Activated CD4-positive, alpha-beta T cell treated with anti-CD3 and anti-CD28 coated beads for 36 hours (primary cell): ENCODE measurements at regions of chr1 and their contacts with region 1.

Region 1: GRCh38 chr1:35451125-35451528 is 106.1 kb downstream of the KIAA0319L start:
- DNase-seq: peak; percentile 89
- ATAC-seq: peak; percentile 68
- H3K4me3 Mint-ChIP-seq: no peak overlapping the region
- H3K27ac Mint-ChIP-seq: peak overlapping the region; percentile 74
- H3K4me1 Mint-ChIP-seq: peaks cover 41% of the 10 kb centered on the region
- H3K27me3 Mint-ChIP-seq: no peaks in the 10 kb centered on the region

Region 2: DNA sequence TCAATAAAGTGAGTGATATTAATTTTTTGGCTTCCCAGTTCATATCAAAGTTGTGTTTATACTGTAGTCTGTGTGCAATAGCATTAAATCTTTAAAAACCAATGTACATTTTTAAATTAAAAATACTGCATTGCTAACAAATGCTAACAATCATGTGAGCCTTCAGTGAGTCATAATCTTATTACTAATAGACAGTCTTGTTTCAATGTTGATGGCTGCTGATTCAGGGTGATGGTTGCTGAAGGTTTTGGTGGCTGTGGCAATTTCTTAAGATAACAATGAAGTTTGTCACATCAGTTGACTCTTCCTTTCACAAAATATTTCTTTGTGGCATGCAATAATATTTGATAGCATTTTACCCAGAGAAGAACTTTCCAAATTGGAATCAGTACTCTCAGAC is 73.6 kb before region 1 on chr1:
- CTCF ChIA-PET with region 1: no interaction called
- POLR2A ChIA-PET with region 1: no interaction called
- intact Hi-C with region 1: no loop called
- DNase-seq: no peak
- ATAC-seq: no peak
- H3K4me3 Mint-ChIP-seq: no peak overlapping the region
- H3K27ac Mint-ChIP-seq: no peak overlapping the region
- H3K4me1 Mint-ChIP-seq: no peaks in the 10 kb centered on the region
- H3K27me3 Mint-ChIP-seq: no peaks in the 10 kb centered on the region

Region 3: GRCh38 chr1:35408925-35409324 is 42.2 kb before region 1 on chr1:
- CTCF ChIA-PET with region 1: interaction called, 10 read pairs
- POLR2A ChIA-PET with region 1: no interaction called
- intact Hi-C with region 1: no loop called
- DNase-seq: no peak
- ATAC-seq: no peak
- H3K4me3 Mint-ChIP-seq: no peak overlapping the region
- H3K27ac Mint-ChIP-seq: no peak overlapping the region
- H3K4me1 Mint-ChIP-seq: no peaks in the 10 kb centered on the region
- H3K27me3 Mint-ChIP-seq: no peaks in the 10 kb centered on the region

Region 4: DNA sequence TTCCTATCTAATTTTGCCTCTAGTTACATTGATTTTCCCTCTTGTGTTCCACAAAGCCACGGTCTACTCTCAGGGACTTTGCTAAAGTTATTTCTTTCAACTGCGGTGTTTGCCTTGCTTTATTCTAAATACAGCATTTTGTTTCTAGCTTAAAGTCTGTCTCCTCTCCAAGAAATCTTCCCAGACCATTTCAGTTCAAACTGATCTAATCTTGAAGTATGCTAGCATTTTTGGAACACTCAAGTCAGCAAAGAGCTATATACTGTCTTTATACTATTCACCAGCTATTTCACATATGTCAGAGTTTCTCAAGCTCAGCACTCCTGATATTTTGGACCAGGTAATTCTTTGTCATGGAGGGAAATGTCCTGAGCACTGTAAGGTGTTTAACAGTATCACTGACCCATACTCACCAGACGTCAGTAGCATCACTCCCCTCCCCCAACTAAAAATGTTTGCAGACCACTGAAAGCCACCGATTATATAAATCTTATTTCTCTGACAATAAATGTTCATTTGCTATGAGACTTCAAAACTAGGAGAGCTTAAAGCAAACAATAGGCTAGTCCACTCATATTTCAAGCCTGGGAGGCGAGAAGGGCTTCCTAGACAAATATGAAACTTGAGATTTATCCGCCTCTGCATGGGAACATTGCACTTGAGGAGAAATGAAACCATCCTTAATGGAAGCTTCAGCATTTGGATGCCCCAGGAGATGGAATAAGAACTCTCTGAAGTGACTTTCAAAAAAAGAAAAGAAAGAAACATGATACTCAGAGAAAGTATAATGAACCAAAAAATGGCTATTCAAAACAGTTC is 24.9 kb after region 1 on chr1:
- CTCF ChIA-PET with region 1: interaction called, 25 read pairs
- POLR2A ChIA-PET with region 1: no interaction called
- intact Hi-C with region 1: no loop called
- DNase-seq: no peak
- ATAC-seq: no peak
- H3K4me3 Mint-ChIP-seq: no peak overlapping the region
- H3K27ac Mint-ChIP-seq: no peak overlapping the region
- H3K4me1 Mint-ChIP-seq: no peaks in the 10 kb centered on the region
- H3K27me3 Mint-ChIP-seq: no peaks in the 10 kb centered on the region

Region 5: DNA sequence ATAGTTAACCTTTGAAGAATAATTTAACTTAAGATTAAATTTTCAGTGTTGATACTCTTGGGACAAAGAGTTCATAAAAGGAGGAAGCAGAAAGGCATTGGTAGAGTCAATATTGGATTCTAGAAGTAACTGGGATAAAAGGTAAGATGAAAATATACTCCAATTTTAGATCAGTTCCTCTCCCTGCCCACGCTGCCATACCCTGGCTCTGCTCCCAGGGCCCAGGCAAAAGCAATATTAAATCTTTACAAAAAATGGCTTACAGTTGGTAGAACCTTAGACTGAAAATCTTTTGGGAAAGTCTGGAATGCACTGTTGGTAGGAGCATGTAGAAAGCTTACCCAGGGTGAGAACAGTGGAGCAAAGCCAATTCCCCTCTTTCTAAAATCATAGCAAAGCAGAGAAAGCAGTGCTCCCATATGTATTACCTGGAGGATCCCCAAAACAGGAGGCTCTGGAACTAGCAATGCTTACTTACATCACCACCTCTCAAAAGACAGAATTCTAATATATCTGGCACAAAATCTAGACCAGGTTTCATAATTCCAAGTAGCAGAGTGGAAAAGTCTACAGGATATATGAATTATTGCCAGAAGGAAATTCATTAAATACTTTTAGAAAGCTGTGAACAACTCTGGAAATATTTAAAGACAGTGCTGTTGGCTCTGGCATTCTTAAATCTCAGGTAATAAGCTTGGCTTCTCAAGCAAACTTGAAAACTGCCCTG is 81.5 kb after region 1 on chr1:
- CTCF ChIA-PET with region 1: interaction called, 54 read pairs
- POLR2A ChIA-PET with region 1: no interaction called
- intact Hi-C with region 1: no loop called
- DNase-seq: no peak
- ATAC-seq: no peak
- H3K4me3 Mint-ChIP-seq: no peak overlapping the region
- H3K27ac Mint-ChIP-seq: no peak overlapping the region
- H3K4me1 Mint-ChIP-seq: peaks cover 34% of the 10 kb centered on the region
- H3K27me3 Mint-ChIP-seq: no peaks in the 10 kb centered on the region

Region 6: DNA sequence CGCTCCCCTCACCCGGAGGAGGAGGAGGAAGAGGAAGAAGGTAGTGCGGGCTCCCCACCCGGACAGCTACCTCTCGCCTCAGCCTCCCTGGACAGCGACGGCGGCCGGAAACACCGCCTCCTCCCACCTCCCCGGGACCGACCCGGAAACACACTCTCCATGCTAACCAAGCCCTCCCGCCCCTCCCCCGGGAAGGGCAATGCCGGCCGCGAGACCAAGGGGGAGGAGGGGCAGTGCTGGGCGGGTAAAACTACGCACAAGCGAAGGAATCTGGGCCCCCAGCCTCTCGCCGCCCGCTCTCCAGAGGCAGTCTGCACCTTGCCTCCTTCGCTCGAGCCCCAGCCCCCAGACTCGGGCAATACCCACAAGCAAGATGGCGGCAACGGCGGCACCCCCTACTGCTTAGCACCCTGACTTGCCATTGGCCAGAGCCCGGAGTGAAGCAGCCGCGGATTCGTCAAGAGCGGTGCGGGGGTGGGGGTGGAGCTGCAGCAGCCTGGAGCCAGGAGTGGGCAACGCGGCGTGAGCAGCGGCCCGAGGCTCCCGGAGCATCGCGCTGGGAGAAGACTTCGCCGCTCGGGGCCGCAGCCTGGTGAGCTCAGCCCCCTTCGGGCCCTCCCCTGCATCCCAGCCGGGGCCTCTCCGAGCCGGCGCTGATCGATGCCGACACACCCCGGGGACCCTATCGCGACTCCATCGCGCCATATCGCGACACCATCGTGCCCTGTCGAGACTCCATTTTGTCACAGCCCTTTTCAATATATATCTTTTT is 106.4 kb after region 1 on chr1 and contains the starts of genes KIAA0319L and NCDN:
- CTCF ChIA-PET with region 1: interaction called, 33 read pairs
- POLR2A ChIA-PET with region 1: interaction called, 3 read pairs
- intact Hi-C with region 1: loop called in 1 of 2 experiments (anchors 1 kb)
- DNase-seq: peak; percentile 99
- ATAC-seq: peak; percentile 92
- H3K4me3 Mint-ChIP-seq: peak within 1 kb of the TSS; percentile 98
- H3K27ac Mint-ChIP-seq: peak within 1 kb of the TSS; percentile 97
- H3K4me1 Mint-ChIP-seq: peaks cover 45% of the 10 kb centered on the region
- H3K27me3 Mint-ChIP-seq: no peaks in the 10 kb centered on the region
- total RNA-seq, gene KIAA0319L: 26.5 to 28.1 TPM
- total RNA-seq, gene NCDN: 21.1 to 23.4 TPM

Region 7: GRCh38 chr1:35715568-35716002 is 264.5 kb after region 1 on chr1:
- CTCF ChIA-PET with region 1: interaction called, 6 read pairs
- POLR2A ChIA-PET with region 1: no interaction called
- intact Hi-C with region 1: loop called (anchors 2 to 5 kb)
- DNase-seq: peak; percentile 90
- ATAC-seq: peak; percentile 61
- H3K4me3 Mint-ChIP-seq: peak overlapping the region; percentile 37
- H3K27ac Mint-ChIP-seq: no peak overlapping the region
- H3K4me1 Mint-ChIP-seq: peaks cover 31% of the 10 kb centered on the region
- H3K27me3 Mint-ChIP-seq: no peaks in the 10 kb centered on the region